Endothelial cell of umbilical vein (primary cell): ENCODE measurements at regions of chr4 and their contacts with region 1.

Region 1: DNA sequence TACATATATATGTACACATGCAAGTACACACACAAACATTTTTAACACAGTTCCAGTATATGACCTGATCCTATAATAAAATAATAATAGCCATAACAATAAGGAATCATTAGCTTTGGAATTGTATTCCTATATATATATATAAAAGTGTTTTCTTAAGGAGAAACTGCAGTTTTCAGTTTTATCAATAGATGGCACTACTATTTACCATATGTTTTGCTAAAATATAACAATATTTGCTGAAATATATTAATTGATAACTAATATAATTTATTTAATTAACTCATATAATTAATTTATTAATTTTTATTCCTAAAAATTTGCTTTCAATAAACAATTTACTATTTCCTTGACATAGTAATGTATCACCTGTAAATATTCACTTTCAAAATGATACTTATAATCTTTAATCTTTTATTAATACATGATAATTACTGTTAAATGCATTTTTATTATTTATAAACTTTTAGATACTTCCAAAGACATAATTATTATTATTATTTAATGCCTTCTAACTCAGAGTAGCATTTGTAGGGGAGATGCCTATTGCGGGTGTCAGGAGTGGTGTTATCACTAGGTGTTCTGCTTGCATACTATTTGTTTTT is 599.5 kb downstream of the FSTL5 start:
- DNase-seq: peak; percentile 17
- H3K4me3 ChIP-seq: no peak overlapping the region
- H3K27ac ChIP-seq: no peak overlapping the region
- H3K4me1 ChIP-seq: peaks cover 27% of the 10 kb centered on the region
- H3K27me3 ChIP-seq: no peaks in the 10 kb centered on the region
- CTCF ChIP-seq: no peak
- POLR2A ChIP-seq: no peak

Region 2: DNA sequence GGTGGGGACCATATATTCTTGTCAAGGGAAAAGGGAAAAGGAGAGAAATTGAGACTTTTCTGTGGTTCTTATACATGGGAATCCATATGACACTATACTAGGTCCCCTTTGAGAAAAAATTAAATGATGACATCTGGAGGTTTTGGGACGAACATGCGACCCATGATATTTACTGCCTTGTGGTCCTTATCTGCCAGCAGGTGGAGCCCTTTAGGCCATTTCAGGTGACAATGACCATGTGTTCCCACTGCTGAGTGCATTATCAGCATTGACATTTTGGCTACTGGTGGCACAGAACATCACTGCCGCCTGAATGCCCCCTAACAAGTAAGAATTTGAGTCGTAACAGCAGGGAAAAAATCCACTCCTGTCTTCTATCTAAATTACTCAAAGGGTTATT is 244.0 kb before region 1 on chr4:
- CTCF ChIA-PET with region 1: no interaction called
- POLR2A ChIA-PET with region 1: no interaction called
- dilution Hi-C with region 1: no loop called
- intact Hi-C with region 1: loop called (anchors 5 kb)
- DNase-seq: peak; percentile 19
- H3K4me3 ChIP-seq: no peak overlapping the region
- H3K27ac ChIP-seq: no peak overlapping the region
- H3K4me1 ChIP-seq: no peaks in the 10 kb centered on the region
- H3K27me3 ChIP-seq: no peaks in the 10 kb centered on the region
- CTCF ChIP-seq: peak; percentile 26 to 39
- POLR2A ChIP-seq: no peak

Region 3: DNA sequence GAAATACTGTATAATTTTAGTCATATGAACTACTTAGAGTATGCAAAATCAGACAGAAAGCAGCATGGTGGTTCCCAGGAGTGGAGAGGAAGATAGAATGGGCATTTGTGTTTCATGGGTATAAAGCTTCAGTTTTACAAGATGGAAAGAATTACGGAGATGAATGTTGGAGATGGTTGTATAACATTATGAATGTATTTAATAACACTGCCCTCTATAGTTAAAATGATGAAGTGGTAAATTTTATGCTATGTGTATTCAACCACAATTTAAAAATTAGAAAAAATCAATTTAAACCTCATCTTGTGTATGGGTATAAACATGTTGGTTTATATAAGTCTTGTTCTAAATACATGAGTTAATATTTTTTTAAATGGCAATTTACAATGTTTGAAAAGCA is 78.4 kb after region 1 on chr4:
- CTCF ChIA-PET with region 1: interaction called, 8 read pairs
- POLR2A ChIA-PET with region 1: no interaction called
- dilution Hi-C with region 1: no loop called
- intact Hi-C with region 1: loop called (anchors 2 kb)
- DNase-seq: peak; percentile 67
- H3K4me3 ChIP-seq: peak overlapping the region in 1 of 3 experiments; percentile 54
- H3K27ac ChIP-seq: no peak overlapping the region
- H3K4me1 ChIP-seq: peaks cover 8% of the 10 kb centered on the region
- H3K27me3 ChIP-seq: no peaks in the 10 kb centered on the region
- CTCF ChIP-seq: peak in 1 of 2 donors; percentile 10
- POLR2A ChIP-seq: no peak

Region 4: GRCh38 chr4:161696944-161697343 is 132.6 kb after region 1 on chr4:
- CTCF ChIA-PET with region 1: no interaction called
- POLR2A ChIA-PET with region 1: no interaction called
- dilution Hi-C with region 1: no loop called
- intact Hi-C with region 1: loop called (anchors 1 kb)
- DNase-seq: peak; percentile 74
- H3K4me3 ChIP-seq: no peak overlapping the region
- H3K27ac ChIP-seq: peak overlapping the region; percentile 87
- H3K4me1 ChIP-seq: peaks cover 22% of the 10 kb centered on the region
- H3K27me3 ChIP-seq: no peaks in the 10 kb centered on the region
- CTCF ChIP-seq: no peak
- POLR2A ChIP-seq: peak; percentile 54

Region 5: DNA sequence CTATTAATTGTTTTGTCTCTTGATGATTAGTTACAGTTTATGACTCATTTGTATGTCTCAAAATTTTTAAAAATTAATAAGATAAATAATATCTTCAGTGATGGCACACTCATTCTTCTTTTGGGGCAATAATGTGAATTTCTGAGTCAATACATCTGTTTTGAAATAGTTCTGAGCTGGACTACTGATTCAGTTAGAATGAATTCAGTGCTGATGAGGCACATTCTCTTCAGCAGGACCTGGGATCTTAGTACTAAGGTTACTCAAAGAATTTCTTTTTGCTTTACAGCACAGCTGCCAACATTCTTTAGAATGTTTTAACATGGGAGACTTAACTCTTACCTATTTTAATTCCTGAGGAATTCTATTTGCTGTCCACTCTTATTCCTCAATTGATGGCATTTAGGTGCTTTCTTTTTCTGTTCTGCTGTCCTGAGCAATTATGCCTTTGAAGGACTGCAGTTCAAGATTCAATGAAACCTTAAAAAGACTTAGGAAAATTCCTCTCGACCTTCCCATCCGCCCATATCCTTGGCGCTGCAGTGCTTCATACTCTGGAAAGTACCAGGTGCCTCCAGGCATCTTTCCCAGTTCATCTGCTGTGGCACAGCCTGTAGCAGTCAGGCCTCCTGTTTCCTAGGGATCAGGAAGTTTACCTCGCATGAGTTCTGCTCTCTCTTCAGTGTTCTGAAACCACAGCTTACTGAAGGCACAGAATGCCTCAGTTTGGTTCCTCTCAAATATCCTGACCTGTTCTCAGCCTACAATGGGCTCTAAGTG is 385.8 kb after region 1 on chr4:
- CTCF ChIA-PET with region 1: interaction called, 25 read pairs
- POLR2A ChIA-PET with region 1: no interaction called
- dilution Hi-C with region 1: no loop called
- intact Hi-C with region 1: no loop called
- DNase-seq: no peak
- H3K4me3 ChIP-seq: no peak overlapping the region
- H3K27ac ChIP-seq: no peak overlapping the region
- H3K4me1 ChIP-seq: no peaks in the 10 kb centered on the region
- H3K27me3 ChIP-seq: no peaks in the 10 kb centered on the region
- CTCF ChIP-seq: no peak
- POLR2A ChIP-seq: no peak

Region 6: GRCh38 chr4:162163852-162164759 is 599.8 kb after region 1 on chr4 and contains the start of gene FSTL5:
- CTCF ChIA-PET with region 1: interaction called, 16 read pairs
- POLR2A ChIA-PET with region 1: no interaction called
- dilution Hi-C with region 1: no loop called
- intact Hi-C with region 1: loop called (anchors 1 kb)
- DNase-seq: peak; percentile 82
- H3K4me3 ChIP-seq: peak within 1 kb of the TSS; percentile 4 to 82 (median 79)
- H3K27ac ChIP-seq: peak within 1 kb of the TSS; percentile 5
- H3K4me1 ChIP-seq: peaks cover 13% of the 10 kb centered on the region
- H3K27me3 ChIP-seq: peaks cover 0 to 1% of the 10 kb centered on the region in 2 experiments
- CTCF ChIP-seq: no peak
- POLR2A ChIP-seq: peak; percentile 52
- total RNA-seq, gene FSTL5: 1.3 and 1.6 TPM in 2 replicates